ENCODE measurements at regions of chr5 and their contacts with region 1.

Region 1: GRCh38 chr5:154610321-154611154 is 132.5 kb upstream of the HAND1 start:
- DNase-seq: peak in 1 of 2 donors; percentile 74
- H3K4me3 ChIP-seq: peak overlapping the region; percentile 50 to 54
- H3K27ac ChIP-seq: no peak overlapping the region
- H3K4me1 ChIP-seq: peaks cover 4 to 7% of the 10 kb centered on the region in 2 donors
- H3K27me3 ChIP-seq: peaks cover 4% of the 10 kb centered on the region
- CTCF ChIP-seq: peak; percentile 57 to 81 (median 71)

Region 2: GRCh38 chr5:154467655-154468354 is 142.7 kb before region 1 on chr5:
- intact Hi-C with region 1: loop called (anchors 2 kb)
- DNase-seq: peak in 1 of 2 donors; percentile 80
- H3K4me3 ChIP-seq: no peak overlapping the region
- H3K27ac ChIP-seq: no peak overlapping the region
- H3K4me1 ChIP-seq: no peaks in the 10 kb centered on the region
- H3K27me3 ChIP-seq: peaks cover 15% of the 10 kb centered on the region
- CTCF ChIP-seq: peak; percentile 56 to 88 (median 88)

Region 3: GRCh38 chr5:154754460-154755360 is 144.2 kb after region 1 on chr5:
- intact Hi-C with region 1: no loop called
- DNase-seq: peak; percentile 96 to 100
- H3K4me3 ChIP-seq: peak overlapping the region; percentile 79 to 90
- H3K27ac ChIP-seq: peak overlapping the region; percentile 94 to 96
- H3K4me1 ChIP-seq: peaks cover 10 to 30% of the 10 kb centered on the region in 2 donors
- H3K27me3 ChIP-seq: no peaks in the 10 kb centered on the region
- CTCF ChIP-seq: peak; percentile 32 to 43 (median 41)

Measured in ascending aorta (tissue), 2 donors.